Posterior vena cava (tissue), 2 donors: ENCODE measurements at regions of chr6 and their contacts with region 1.

Region 1: GRCh38 chr6:16635810-16636602 is 125.3 kb downstream of the ATXN1 start:
- DNase-seq: no peak

Region 2: DNA sequence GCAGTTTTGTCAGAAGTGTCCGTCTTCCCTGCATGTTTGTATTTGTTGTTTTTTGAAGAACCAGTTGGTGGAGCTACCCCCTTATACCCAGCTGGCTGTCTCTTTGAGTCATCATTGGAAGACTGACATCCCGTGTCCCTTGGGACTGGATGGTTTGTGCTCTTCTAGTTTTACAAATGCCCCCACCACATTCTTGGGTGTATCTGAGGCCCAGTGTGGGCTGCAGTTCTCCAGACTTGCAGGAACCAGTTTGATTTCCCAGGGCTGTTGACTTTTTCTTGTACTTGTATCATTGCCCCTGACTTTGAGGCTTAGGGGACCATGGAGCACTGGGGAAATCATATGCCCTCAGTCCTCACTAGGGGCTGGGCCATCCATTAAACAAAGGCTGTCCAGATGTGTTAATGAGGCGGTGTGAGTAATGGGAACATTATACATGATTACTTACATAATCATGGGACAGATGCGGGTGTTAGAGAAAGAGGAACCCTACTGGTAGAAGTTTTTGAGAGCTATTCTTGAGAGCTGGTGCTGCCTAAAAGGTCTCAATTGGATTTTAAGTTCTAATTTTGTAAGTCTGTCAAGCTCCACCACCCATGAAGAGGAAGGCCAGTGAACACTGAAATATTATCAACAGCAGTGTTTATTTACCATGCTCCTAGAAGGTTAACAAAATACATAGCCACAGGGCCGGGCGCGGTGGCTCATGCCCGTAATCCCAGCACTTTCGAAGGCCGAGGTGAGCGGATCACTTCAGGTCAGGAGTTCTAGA is 1381.8 kb before region 1 on chr6:
- intact Hi-C with region 1: loop called in 1 of 2 experiments (anchors 10 kb)
- DNase-seq: no peak

Region 3: GRCh38 chr6:15977050-15977449 is 659.0 kb before region 1 on chr6:
- intact Hi-C with region 1: no loop called
- DNase-seq: no peak

Region 4: GRCh38 chr6:16249971-16250370 is 386.0 kb before region 1 on chr6:
- intact Hi-C with region 1: no loop called
- DNase-seq: no peak